Common myeloid progenitor, CD34-positive (primary cell): ENCODE measurements at regions of chr15 and their contacts with region 1.

Region 1: DNA sequence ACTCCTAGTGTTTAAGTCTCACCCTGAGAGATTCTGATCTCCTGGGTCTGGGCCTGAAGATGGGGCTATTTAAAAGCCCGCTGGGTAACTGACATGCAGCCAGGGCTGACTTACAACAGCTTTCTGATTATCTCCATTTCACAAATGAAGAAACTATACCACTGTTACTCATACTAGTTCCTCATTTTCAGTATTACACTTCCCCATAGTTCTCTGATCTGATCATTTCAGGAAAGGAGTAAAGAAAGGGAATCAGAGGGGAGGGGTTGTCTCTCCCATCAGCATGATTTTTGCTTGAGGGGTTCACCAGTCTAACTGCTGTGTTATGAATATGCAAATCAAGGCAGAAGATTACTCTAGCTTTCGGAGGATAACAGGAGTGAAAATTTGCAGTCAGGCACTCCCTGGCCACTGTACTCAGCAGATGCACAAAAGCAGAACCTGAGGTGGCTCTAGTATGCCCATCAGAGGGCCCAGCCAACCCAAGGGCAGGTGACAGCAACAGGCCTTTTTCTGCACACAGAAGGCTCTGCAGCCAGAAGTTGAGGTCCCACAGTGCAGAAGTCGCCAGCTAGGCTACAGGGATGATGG is 59.4 kb downstream of the DAPK2 start:
- DNase-seq: peak; percentile 70 to 93 (median 91)
- H3K4me3 ChIP-seq: peak overlapping the region in 2 of 7 experiments; percentile 1 to 19
- H3K27ac ChIP-seq: peak overlapping the region in 1 of 2 experiments; percentile 55
- H3K4me1 ChIP-seq: peaks cover 19 to 60% (median 54%) of the 10 kb centered on the region in 4 experiments
- H3K27me3 ChIP-seq: no peaks in the 10 kb centered on the region

Region 2: DNA sequence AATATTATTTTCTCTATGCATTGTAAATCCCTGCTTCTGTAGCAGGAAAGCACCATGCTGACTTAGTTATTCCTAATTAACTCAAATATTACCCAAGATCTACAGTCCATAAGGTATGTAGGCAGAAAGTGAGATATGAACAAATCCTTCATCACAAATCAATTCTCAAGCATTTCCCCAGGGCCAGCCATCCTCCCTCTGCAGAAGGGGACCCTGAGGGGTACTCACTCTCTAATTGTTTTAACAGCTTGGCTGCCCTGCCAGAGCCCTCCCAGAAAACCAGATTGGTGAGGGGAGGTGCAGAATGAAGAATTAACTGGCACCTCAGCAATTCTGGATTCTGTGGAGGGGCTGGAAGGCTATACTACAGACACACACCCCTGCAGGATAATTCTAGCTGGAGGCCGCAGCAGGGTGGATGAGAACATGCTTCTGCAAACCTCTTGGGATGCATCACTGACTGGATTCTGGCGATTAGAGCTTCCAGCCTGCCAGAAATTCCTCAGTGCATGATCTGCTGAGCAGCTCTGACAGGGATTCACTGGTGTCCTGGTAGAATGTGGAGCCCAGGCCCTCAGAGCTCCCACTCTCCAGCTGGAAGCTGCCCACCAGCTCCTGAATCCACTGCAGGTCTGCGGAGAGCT is 64.5 kb before region 1 on chr15:
- CTCF ChIA-PET with region 1: no interaction called
- POLR2A ChIA-PET with region 1: no interaction called
- DNase-seq: no peak
- H3K4me3 ChIP-seq: no peak overlapping the region
- H3K27ac ChIP-seq: no peak overlapping the region
- H3K4me1 ChIP-seq: peaks cover 0 to 11% (median 3%) of the 10 kb centered on the region in 4 experiments
- H3K27me3 ChIP-seq: no peaks in the 10 kb centered on the region

Region 3: GRCh38 chr15:63970621-63971426 is 16.0 kb before region 1 on chr15:
- CTCF ChIA-PET with region 1: interaction called, 10 read pairs
- POLR2A ChIA-PET with region 1: no interaction called
- DNase-seq: peak in 1 of 3 donors; percentile 19
- H3K4me3 ChIP-seq: no peak overlapping the region
- H3K27ac ChIP-seq: no peak overlapping the region
- H3K4me1 ChIP-seq: peaks cover 3 to 22% (median 18%) of the 10 kb centered on the region in 4 experiments
- H3K27me3 ChIP-seq: no peaks in the 10 kb centered on the region